ENCODE measurements at regions of chr6 and their contacts with region 1.

Region 1: DNA sequence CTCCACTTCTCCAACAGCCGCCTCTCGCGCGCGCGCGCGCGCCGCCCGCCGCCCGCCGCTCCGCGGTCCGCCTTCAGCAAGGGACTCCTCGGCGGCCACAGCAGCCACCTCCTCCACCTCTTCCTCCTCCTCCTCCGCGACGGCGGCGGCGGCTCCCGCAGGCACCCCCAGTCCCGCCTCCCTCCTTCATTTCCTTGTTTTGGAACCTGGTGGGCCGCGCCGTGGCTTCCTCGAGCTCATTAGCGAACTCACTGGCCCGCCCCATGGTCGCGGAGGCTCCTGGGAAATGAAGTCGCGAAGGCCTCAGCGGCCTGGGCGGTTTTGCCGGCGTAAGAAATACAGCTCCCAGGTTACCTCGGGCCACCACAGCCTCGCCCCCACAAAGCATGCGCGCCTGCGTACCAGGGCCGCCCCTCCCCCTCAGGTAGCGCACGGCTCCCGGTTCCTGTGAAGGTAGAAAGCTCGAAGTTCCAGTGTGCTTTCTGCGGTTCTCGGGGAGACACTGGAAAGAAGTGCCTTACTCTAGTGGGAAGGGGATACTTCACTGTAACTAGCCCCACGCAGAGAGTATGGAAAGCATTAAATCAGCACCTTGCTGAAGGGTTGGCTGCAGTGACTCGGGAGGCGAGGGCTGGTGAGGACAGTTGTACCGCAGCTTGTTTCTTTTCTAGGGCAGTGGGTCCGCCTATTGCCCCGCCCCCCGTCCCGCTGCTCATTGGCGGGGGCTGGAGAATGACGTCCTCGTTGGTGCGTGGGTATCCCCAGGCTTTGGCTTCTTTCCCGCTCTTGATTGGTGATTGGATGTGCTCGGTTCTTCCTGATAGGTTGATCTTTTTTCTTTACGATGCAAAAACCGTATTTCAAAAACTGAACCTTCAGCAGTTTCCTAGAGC is at the start of gene CDK19:
- DNase-seq: peak; percentile 97 to 100 (median 98)
- ATAC-seq: peak; percentile 82
- H3K4me3 ChIP-seq: peak within 1 kb of the TSS; percentile 88
- H3K4me3 Mint-ChIP-seq: peak within 1 kb of the TSS; percentile 99
- H3K27ac ChIP-seq: peak within 1 kb of the TSS; percentile 82 to 93
- H3K27ac Mint-ChIP-seq: peak within 1 kb of the TSS; percentile 99
- H3K4me1 ChIP-seq: peaks cover 16% of the 10 kb centered on the region
- H3K4me1 Mint-ChIP-seq: peaks cover 33% of the 10 kb centered on the region
- H3K27me3 ChIP-seq: no peaks in the 10 kb centered on the region
- H3K27me3 Mint-ChIP-seq: no peaks in the 10 kb centered on the region
- CTCF ChIP-seq: no peak
- total RNA-seq, gene CDK19: 6.4 to 8.3 TPM

Region 2: GRCh38 chr6:109690737-109691621 is 1124.5 kb before region 1 on chr6 and contains the starts of genes AK9 and FIG4:
- CTCF ChIA-PET with region 1: no interaction called
- POLR2A ChIA-PET with region 1: interaction called, 3 read pairs
- intact Hi-C with region 1: loop called in 1 of 2 experiments (anchors 5 kb)
- DNase-seq: peak; percentile 76 to 94 (median 88)
- ATAC-seq: peak; percentile 96
- H3K4me3 ChIP-seq: peak within 1 kb of the TSS; percentile 88
- H3K4me3 Mint-ChIP-seq: peak within 1 kb of the TSS; percentile 96
- H3K27ac ChIP-seq: peak within 1 kb of the TSS; percentile 59 to 71
- H3K27ac Mint-ChIP-seq: peak within 1 kb of the TSS; percentile 95
- H3K4me1 ChIP-seq: peaks cover 13% of the 10 kb centered on the region
- H3K4me1 Mint-ChIP-seq: peaks cover 34% of the 10 kb centered on the region
- H3K27me3 ChIP-seq: no peaks in the 10 kb centered on the region
- H3K27me3 Mint-ChIP-seq: no peaks in the 10 kb centered on the region
- CTCF ChIP-seq: peak; percentile 27
- total RNA-seq, gene AK9: 5.3 to 6.6 TPM
- total RNA-seq, gene FIG4: 3.3 to 4.0 TPM

Region 3: GRCh38 chr6:110329714-110330436 is 485.6 kb before region 1 on chr6:
- CTCF ChIA-PET with region 1: no interaction called
- POLR2A ChIA-PET with region 1: no interaction called
- intact Hi-C with region 1: no loop called
- DNase-seq: no peak
- ATAC-seq: no peak
- H3K4me3 ChIP-seq: no peak overlapping the region
- H3K4me3 Mint-ChIP-seq: no peak overlapping the region
- H3K27ac ChIP-seq: no peak overlapping the region
- H3K27ac Mint-ChIP-seq: no peak overlapping the region
- H3K4me1 ChIP-seq: no peaks in the 10 kb centered on the region
- H3K4me1 Mint-ChIP-seq: no peaks in the 10 kb centered on the region
- H3K27me3 ChIP-seq: peaks cover 0 to 5% of the 10 kb centered on the region in 2 experiments
- H3K27me3 Mint-ChIP-seq: peaks cover 4% of the 10 kb centered on the region
- CTCF ChIP-seq: no peak

Region 4: GRCh38 chr6:110688661-110689268 is 126.7 kb before region 1 on chr6:
- CTCF ChIA-PET with region 1: no interaction called
- POLR2A ChIA-PET with region 1: interaction called, 12 read pairs
- intact Hi-C with region 1: loop called (anchors 2 to 5 kb)
- DNase-seq: no peak
- ATAC-seq: peak; percentile 43
- H3K4me3 ChIP-seq: no peak overlapping the region
- H3K4me3 Mint-ChIP-seq: no peak overlapping the region
- H3K27ac ChIP-seq: peak overlapping the region in 1 of 2 donors; percentile 7
- H3K27ac Mint-ChIP-seq: no peak overlapping the region
- H3K4me1 ChIP-seq: peaks cover 27% of the 10 kb centered on the region
- H3K4me1 Mint-ChIP-seq: peaks cover 32% of the 10 kb centered on the region
- H3K27me3 ChIP-seq: no peaks in the 10 kb centered on the region
- H3K27me3 Mint-ChIP-seq: no peaks in the 10 kb centered on the region
- CTCF ChIP-seq: no peak

Region 5: DNA sequence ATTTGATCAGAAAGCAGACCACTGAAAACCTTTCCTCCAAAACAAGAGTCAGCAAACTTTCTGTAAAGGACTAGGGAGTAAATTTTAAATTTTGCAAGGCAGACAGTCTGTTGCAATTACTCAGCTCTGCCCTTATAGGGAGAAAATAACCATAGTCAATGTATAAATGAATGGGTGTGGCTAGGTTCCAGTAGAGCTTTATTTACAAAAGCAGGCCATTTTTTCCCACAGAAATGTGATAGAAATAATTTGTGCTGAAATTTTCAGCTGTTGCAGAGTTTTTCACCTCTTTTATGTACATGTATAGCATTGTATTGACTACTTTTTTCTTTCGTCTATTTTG is 66.8 kb after region 1 on chr6:
- CTCF ChIA-PET with region 1: interaction called, 16 read pairs
- POLR2A ChIA-PET with region 1: interaction called, 809 read pairs
- intact Hi-C with region 1: no loop called
- DNase-seq: no peak
- ATAC-seq: no peak
- H3K4me3 ChIP-seq: no peak overlapping the region
- H3K4me3 Mint-ChIP-seq: peak overlapping the region; percentile 32
- H3K27ac ChIP-seq: no peak overlapping the region
- H3K27ac Mint-ChIP-seq: peak overlapping the region; percentile 43
- H3K4me1 ChIP-seq: peaks cover 74% of the 10 kb centered on the region
- H3K4me1 Mint-ChIP-seq: peaks cover 97% of the 10 kb centered on the region
- H3K27me3 ChIP-seq: no peaks in the 10 kb centered on the region
- H3K27me3 Mint-ChIP-seq: no peaks in the 10 kb centered on the region
- CTCF ChIP-seq: no peak

Region 6: GRCh38 chr6:110938171-110938570 is 122.7 kb after region 1 on chr6:
- CTCF ChIA-PET with region 1: no interaction called
- POLR2A ChIA-PET with region 1: no interaction called
- intact Hi-C with region 1: no loop called
- DNase-seq: no peak
- ATAC-seq: no peak
- H3K4me3 ChIP-seq: no peak overlapping the region
- H3K4me3 Mint-ChIP-seq: no peak overlapping the region
- H3K27ac ChIP-seq: no peak overlapping the region
- H3K27ac Mint-ChIP-seq: no peak overlapping the region
- H3K4me1 ChIP-seq: no peaks in the 10 kb centered on the region
- H3K4me1 Mint-ChIP-seq: no peaks in the 10 kb centered on the region
- H3K27me3 ChIP-seq: no peaks in the 10 kb centered on the region
- H3K27me3 Mint-ChIP-seq: no peaks in the 10 kb centered on the region
- CTCF ChIP-seq: no peak

Region 7: GRCh38 chr6:111087106-111087835 is 271.8 kb after region 1 on chr6 and contains the start of gene SLC16A10:
- CTCF ChIA-PET with region 1: no interaction called
- POLR2A ChIA-PET with region 1: no interaction called
- intact Hi-C with region 1: loop called in 1 of 2 experiments (anchors 10 kb)
- DNase-seq: peak; percentile 63 to 93 (median 82)
- ATAC-seq: peak; percentile 83
- H3K4me3 ChIP-seq: peak within 1 kb of the TSS; percentile 60
- H3K4me3 Mint-ChIP-seq: peak within 1 kb of the TSS; percentile 95
- H3K27ac ChIP-seq: peak within 1 kb of the TSS; percentile 40 to 53
- H3K27ac Mint-ChIP-seq: peak within 1 kb of the TSS; percentile 92
- H3K4me1 ChIP-seq: no peaks in the 10 kb centered on the region
- H3K4me1 Mint-ChIP-seq: peaks cover 48% of the 10 kb centered on the region
- H3K27me3 ChIP-seq: no peaks in the 10 kb centered on the region
- H3K27me3 Mint-ChIP-seq: no peaks in the 10 kb centered on the region
- CTCF ChIP-seq: no peak
- total RNA-seq, gene SLC16A10: 13.4 to 13.8 TPM

Region 8: DNA sequence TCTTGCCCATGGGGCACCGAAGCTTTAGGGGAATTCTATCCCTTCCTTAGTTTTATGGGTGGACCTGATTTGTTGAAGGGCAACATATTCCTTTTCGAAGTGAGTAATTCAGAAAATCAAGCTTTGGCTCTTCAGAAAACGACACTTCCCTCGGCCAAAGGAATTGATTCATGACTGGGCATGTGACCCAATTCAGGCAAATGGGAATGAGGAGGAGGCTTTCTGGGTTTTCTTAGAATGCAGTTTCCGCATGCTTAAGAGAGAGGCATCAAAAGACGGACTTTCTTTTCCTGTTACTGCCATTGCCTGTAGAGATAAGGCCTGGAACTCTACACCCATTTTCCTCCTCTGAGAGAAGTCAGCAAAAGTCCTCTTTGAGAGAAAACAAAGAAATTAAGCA is 1711.1 kb after region 1 on chr6:
- CTCF ChIA-PET with region 1: no interaction called
- POLR2A ChIA-PET with region 1: no interaction called
- intact Hi-C with region 1: no loop called
- DNase-seq: no peak
- ATAC-seq: no peak
- H3K4me3 ChIP-seq: no peak overlapping the region
- H3K4me3 Mint-ChIP-seq: no peak overlapping the region
- H3K27ac ChIP-seq: no peak overlapping the region
- H3K27ac Mint-ChIP-seq: no peak overlapping the region
- H3K4me1 ChIP-seq: no peaks in the 10 kb centered on the region
- H3K4me1 Mint-ChIP-seq: no peaks in the 10 kb centered on the region
- H3K27me3 ChIP-seq: no peaks in the 10 kb centered on the region
- H3K27me3 Mint-ChIP-seq: no peaks in the 10 kb centered on the region
- CTCF ChIP-seq: no peak

Measured in CD4-positive, alpha-beta T cell (primary cell).